Activated B cell treated with CpG ODN at 0.5 μM for 24 hours (primary cell): ENCODE measurements at regions of chr5 and their contacts with region 1.

Region 1: DNA sequence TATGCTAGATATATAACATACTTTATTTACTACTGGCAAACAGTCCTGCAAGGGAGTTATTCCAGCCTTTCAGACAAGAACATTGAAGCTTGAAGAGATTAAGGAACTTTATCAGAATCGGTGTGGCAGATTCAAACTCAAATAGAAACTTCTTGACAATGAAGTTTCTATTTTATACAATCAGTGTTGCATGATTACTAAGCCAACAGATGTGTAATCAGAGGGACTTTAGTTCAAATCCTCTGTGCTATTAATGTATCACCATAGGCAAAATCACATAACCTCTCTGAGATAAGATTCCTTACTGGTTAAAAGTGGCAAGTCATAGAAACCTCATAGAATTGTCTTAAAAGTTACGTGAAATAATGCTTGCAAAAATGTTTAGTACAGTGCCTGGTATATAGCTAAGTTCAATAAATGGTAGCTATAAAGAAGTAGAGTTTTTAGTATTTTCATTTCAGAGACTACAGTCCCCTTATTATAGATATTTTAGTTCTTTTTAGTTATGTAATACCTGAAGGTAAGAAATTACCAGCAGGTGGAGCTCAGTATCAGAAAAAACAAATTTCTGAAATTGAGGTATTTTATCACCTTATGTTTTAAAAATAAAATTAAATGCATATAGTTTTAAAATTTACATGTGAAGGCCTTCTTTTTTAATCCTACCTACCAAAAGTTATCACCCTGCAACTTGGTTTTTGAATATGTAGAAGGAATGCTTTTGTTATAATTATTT is 172.1 kb downstream of the FER start:
- DNase-seq: no peak
- ATAC-seq: no peak
- H3K4me3 Mint-ChIP-seq: no peak overlapping the region
- H3K27ac Mint-ChIP-seq: no peak overlapping the region
- H3K4me1 Mint-ChIP-seq: peaks cover 4% of the 10 kb centered on the region
- H3K27me3 Mint-ChIP-seq: no peaks in the 10 kb centered on the region
- CTCF ChIP-seq: no peak

Region 2: DNA sequence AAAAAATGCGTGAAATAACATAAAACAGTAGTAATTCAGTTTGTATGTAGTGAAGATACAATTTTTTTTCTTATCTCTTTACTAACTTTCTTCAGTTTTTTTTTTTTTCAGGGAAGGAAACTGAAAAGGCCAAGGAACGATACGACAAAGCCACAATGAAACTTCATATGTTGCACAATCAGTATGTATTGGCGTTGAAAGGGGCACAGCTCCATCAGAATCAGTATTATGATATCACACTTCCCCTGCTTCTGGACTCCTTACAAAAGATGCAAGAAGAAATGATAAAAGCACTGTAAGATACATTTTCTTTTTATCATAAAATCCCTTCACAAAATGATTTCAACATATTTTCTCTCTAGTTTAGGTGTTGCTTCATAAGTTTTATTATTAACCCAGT is 52.1 kb before region 1 on chr5:
- CTCF ChIA-PET with region 1: no interaction called
- POLR2A ChIA-PET with region 1: no interaction called
- intact Hi-C with region 1: no loop called
- DNase-seq: no peak
- ATAC-seq: no peak
- H3K4me3 Mint-ChIP-seq: no peak overlapping the region
- H3K27ac Mint-ChIP-seq: no peak overlapping the region
- H3K4me1 Mint-ChIP-seq: no peaks in the 10 kb centered on the region
- H3K27me3 Mint-ChIP-seq: no peaks in the 10 kb centered on the region
- CTCF ChIP-seq: no peak

Region 3: GRCh38 chr5:108935611-108936010 is 15.9 kb after region 1 on chr5:
- CTCF ChIA-PET with region 1: no interaction called
- POLR2A ChIA-PET with region 1: no interaction called
- intact Hi-C with region 1: loop called (anchors 1 kb)
- DNase-seq: no peak
- ATAC-seq: no peak
- H3K4me3 Mint-ChIP-seq: no peak overlapping the region
- H3K27ac Mint-ChIP-seq: no peak overlapping the region
- H3K4me1 Mint-ChIP-seq: no peaks in the 10 kb centered on the region
- H3K27me3 Mint-ChIP-seq: no peaks in the 10 kb centered on the region
- CTCF ChIP-seq: no peak

Region 4: GRCh38 chr5:109161914-109162683 is 242.3 kb after region 1 on chr5:
- CTCF ChIA-PET with region 1: no interaction called
- POLR2A ChIA-PET with region 1: no interaction called
- intact Hi-C with region 1: no loop called
- DNase-seq: no peak
- ATAC-seq: no peak
- H3K4me3 Mint-ChIP-seq: no peak overlapping the region
- H3K27ac Mint-ChIP-seq: peak overlapping the region; percentile 51
- H3K4me1 Mint-ChIP-seq: peaks cover 31% of the 10 kb centered on the region
- H3K27me3 Mint-ChIP-seq: no peaks in the 10 kb centered on the region
- CTCF ChIP-seq: no peak

Region 5: DNA sequence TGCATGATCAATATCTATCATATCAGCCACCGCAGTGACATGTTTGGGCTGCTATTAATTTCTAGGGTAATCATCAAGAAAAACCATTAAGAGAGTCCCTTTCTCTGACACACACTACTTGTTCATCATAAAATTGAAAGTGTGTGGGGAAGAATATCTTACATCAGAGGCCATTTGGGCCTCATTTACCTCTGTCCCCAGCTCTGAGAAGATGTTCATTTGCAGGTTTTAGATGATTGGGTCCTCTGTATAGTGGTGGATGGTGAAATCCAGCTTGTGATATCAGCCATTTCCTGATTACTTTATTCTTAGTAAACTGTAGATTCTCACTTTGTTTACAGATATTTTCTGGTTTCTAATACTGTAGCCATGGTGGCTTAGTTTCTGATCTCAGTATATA is 519.8 kb after region 1 on chr5:
- CTCF ChIA-PET with region 1: no interaction called
- POLR2A ChIA-PET with region 1: no interaction called
- intact Hi-C with region 1: loop called (anchors 2 kb)
- DNase-seq: no peak
- ATAC-seq: no peak
- H3K4me3 Mint-ChIP-seq: no peak overlapping the region
- H3K27ac Mint-ChIP-seq: no peak overlapping the region
- H3K4me1 Mint-ChIP-seq: no peaks in the 10 kb centered on the region
- H3K27me3 Mint-ChIP-seq: no peaks in the 10 kb centered on the region
- CTCF ChIP-seq: no peak

Region 6: GRCh38 chr5:109479260-109479860 is 559.6 kb after region 1 on chr5:
- CTCF ChIA-PET with region 1: interaction called, 5 read pairs
- POLR2A ChIA-PET with region 1: no interaction called
- intact Hi-C with region 1: loop called (anchors 5 kb)
- DNase-seq: no peak
- ATAC-seq: no peak
- H3K4me3 Mint-ChIP-seq: no peak overlapping the region
- H3K27ac Mint-ChIP-seq: no peak overlapping the region
- H3K4me1 Mint-ChIP-seq: peaks cover 7% of the 10 kb centered on the region
- H3K27me3 Mint-ChIP-seq: peaks cover 6% of the 10 kb centered on the region
- CTCF ChIP-seq: no peak

Region 7: GRCh38 chr5:110625376-110625999 is 1705.7 kb after region 1 on chr5:
- CTCF ChIA-PET with region 1: no interaction called
- POLR2A ChIA-PET with region 1: no interaction called
- intact Hi-C with region 1: loop called (anchors 2 kb)
- DNase-seq: no peak
- ATAC-seq: no peak
- H3K4me3 Mint-ChIP-seq: no peak overlapping the region
- H3K27ac Mint-ChIP-seq: no peak overlapping the region
- H3K4me1 Mint-ChIP-seq: no peaks in the 10 kb centered on the region
- H3K27me3 Mint-ChIP-seq: no peaks in the 10 kb centered on the region
- CTCF ChIP-seq: peak; percentile 77